Cardiac septum (tissue), 1 donor: ENCODE measurements at regions of chr10 and their contacts with region 1.

Region 1: GRCh38 chr10:42866115-42866995 is 83.8 kb downstream of the BMS1 start:
- DNase-seq: peak; percentile 90

Region 2: GRCh38 chr10:43078987-43079275 is 212.6 kb after region 1 on chr10:
- intact Hi-C with region 1: loop called (anchors 5 kb)
- DNase-seq: no peak

Region 3: DNA sequence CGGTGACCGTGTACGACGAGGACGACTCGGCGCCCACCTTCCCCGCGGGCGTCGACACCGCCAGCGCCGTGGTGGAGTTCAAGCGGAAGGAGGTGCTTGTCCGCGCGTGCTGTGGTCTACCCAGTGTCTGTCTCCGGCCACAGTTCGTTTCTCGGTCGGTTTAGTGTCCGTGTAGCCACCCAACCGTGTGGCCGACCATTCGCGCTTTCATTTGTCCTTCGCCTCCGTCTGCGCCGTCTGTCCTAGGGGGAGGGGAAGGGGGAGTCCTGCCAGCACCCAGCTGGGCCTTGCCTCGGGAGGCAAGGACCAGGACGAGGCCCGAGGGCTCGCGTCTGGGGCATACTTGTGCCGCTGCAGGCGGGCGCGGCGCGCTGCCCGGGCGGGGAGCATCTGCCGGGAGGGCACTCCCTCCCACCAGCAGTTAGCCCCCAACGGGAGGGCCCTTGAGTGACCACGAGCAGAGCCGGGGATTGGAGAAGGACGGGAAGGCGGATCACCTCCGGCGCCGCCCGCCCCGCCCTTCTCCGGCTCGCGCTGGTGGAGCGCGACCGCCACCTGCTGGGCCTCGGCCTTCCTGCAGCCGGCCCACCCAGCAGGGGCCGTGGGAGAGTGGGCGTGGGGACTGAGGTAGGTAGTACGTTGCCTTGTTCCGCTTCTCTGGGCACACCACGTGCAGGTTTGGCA is 238.9 kb after region 1 on chr10:
- intact Hi-C with region 1: loop called (anchors 1 kb)
- DNase-seq: peak; percentile 93

Region 4: GRCh38 chr10:43348511-43349312 is 482.4 kb after region 1 on chr10:
- intact Hi-C with region 1: loop called (anchors 10 kb)
- DNase-seq: peak; percentile 93